ENCODE measurements at regions of chr6 and their contacts with region 1.

Region 1: GRCh38 chr6:44475779-44476434 is 88.4 kb downstream of the CDC5L start:
- DNase-seq: peak; percentile 81
- H3K4me3 Mint-ChIP-seq: no peak overlapping the region
- H3K27ac Mint-ChIP-seq: no peak overlapping the region
- H3K4me1 Mint-ChIP-seq: no peaks in the 10 kb centered on the region
- H3K27me3 Mint-ChIP-seq: peaks cover 5% of the 10 kb centered on the region

Region 2: GRCh38 chr6:43883847-43884651 is 591.9 kb before region 1 on chr6:
- CTCF ChIA-PET with region 1: no interaction called
- POLR2A ChIA-PET with region 1: no interaction called
- intact Hi-C with region 1: no loop called
- DNase-seq: no peak
- H3K4me3 Mint-ChIP-seq: no peak overlapping the region
- H3K27ac Mint-ChIP-seq: no peak overlapping the region
- H3K4me1 Mint-ChIP-seq: no peaks in the 10 kb centered on the region
- H3K27me3 Mint-ChIP-seq: peaks cover 9% of the 10 kb centered on the region

Region 3: GRCh38 chr6:44464527-44465310 is 11.2 kb before region 1 on chr6:
- CTCF ChIA-PET with region 1: interaction called, 60 read pairs
- POLR2A ChIA-PET with region 1: no interaction called
- intact Hi-C with region 1: no loop called
- DNase-seq: no peak
- H3K4me3 Mint-ChIP-seq: no peak overlapping the region
- H3K27ac Mint-ChIP-seq: no peak overlapping the region
- H3K4me1 Mint-ChIP-seq: no peaks in the 10 kb centered on the region
- H3K27me3 Mint-ChIP-seq: peaks cover 4% of the 10 kb centered on the region

Region 4: DNA sequence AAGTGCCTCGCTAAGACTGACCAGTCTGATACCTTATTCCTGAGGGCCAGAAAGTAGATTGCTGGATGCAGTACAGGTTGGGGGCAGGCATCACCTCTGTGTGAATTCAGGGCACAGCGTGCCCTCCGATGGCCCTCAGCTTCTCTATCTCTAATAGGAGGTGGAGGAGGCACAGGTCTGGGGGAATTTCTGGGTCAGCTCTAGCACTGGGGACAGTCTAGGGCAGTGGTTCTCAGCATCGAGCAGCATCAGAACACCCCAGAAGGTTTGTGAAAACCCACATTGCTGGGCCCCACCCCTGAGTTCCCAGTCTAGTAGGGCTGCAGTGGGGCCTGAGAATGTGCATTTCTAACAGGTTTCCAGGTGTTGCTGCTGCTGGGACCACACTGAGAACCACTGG is 78.3 kb after region 1 on chr6:
- CTCF ChIA-PET with region 1: no interaction called
- POLR2A ChIA-PET with region 1: no interaction called
- intact Hi-C with region 1: no loop called
- DNase-seq: no peak
- H3K4me3 Mint-ChIP-seq: no peak overlapping the region
- H3K27ac Mint-ChIP-seq: no peak overlapping the region
- H3K4me1 Mint-ChIP-seq: no peaks in the 10 kb centered on the region
- H3K27me3 Mint-ChIP-seq: peaks cover 16% of the 10 kb centered on the region

Region 5: DNA sequence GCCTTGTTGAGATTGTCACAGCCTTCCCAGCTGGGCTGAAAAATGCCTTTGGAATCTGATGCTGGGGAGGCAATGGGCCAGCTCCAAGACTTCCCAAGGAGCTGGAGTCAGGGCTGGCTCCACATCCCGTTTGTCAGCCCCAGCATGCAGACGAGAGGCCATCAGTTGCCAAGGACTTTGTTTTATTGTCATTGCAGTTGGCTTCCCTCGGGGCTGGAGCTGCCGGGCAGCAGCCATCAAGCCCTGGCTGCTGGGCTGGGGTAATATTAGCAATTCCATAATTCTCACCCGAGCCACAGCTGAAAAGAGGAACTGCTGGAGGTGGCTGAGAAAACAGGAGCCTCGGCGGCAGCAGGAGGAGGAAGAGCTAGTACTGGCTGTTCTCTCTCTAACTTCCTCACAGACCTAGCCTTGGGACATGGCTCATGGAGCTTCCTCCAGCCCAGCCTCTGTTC is 94.1 kb after region 1 on chr6:
- CTCF ChIA-PET with region 1: interaction called, 3 read pairs
- POLR2A ChIA-PET with region 1: no interaction called
- intact Hi-C with region 1: loop called (anchors 10 kb)
- DNase-seq: no peak
- H3K4me3 Mint-ChIP-seq: no peak overlapping the region
- H3K27ac Mint-ChIP-seq: no peak overlapping the region
- H3K4me1 Mint-ChIP-seq: no peaks in the 10 kb centered on the region
- H3K27me3 Mint-ChIP-seq: no peaks in the 10 kb centered on the region

Region 6: GRCh38 chr6:44630125-44631028 is 154.5 kb after region 1 on chr6:
- CTCF ChIA-PET with region 1: interaction called, 30 read pairs
- POLR2A ChIA-PET with region 1: no interaction called
- intact Hi-C with region 1: no loop called
- DNase-seq: peak; percentile 66
- H3K4me3 Mint-ChIP-seq: no peak overlapping the region
- H3K27ac Mint-ChIP-seq: no peak overlapping the region
- H3K4me1 Mint-ChIP-seq: peaks cover 15% of the 10 kb centered on the region
- H3K27me3 Mint-ChIP-seq: no peaks in the 10 kb centered on the region

Region 7: DNA sequence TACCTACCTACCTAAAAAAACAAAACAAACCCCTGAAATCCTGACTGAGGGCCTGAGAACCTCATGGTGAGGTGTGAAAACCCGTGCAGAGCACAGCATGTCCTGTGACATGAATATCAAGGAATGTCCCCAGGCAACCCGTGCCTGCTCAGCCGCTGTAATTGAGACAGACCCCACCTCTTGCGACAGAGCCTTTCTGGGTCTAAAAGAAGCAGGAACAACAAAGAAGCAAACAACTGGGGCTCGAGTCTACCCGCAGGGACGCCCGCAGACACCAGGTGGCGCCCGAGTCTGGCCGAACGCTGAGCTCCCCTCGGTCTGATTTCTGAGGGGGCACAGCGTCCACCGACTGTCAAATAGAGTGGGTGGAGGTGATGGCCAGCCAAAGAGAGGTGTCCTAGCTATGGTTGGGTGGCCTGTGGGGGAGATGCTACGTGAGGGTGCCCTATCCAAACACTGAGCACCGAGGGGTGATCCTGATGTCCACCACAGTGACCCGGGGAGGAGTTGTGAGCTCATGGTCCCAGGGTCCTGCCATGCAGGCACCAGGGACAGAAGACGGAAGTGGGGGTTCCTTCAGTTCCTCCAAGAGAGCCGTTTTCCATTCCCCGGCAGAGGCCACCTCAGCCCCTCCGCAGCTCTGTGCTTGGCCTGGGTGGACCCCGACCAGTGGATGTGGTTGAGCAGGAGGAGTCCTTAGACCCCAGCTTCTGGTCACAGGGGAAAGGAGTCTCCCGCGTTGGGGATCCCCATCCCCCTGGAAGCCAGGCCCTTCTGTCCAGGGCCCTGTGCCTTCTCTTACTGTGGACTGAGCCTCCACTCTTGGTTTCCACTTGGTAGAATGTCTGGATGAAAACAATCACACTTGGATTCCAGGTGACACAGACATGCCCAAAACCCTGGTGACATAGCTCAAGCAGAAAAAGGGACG is 179.8 kb after region 1 on chr6:
- CTCF ChIA-PET with region 1: interaction called, 11 read pairs
- POLR2A ChIA-PET with region 1: interaction called, 3 read pairs
- intact Hi-C with region 1: no loop called
- DNase-seq: peak; percentile 85
- H3K4me3 Mint-ChIP-seq: peak overlapping the region; percentile 24
- H3K27ac Mint-ChIP-seq: peak overlapping the region; percentile 76
- H3K4me1 Mint-ChIP-seq: peaks cover 9% of the 10 kb centered on the region
- H3K27me3 Mint-ChIP-seq: no peaks in the 10 kb centered on the region

Region 8: DNA sequence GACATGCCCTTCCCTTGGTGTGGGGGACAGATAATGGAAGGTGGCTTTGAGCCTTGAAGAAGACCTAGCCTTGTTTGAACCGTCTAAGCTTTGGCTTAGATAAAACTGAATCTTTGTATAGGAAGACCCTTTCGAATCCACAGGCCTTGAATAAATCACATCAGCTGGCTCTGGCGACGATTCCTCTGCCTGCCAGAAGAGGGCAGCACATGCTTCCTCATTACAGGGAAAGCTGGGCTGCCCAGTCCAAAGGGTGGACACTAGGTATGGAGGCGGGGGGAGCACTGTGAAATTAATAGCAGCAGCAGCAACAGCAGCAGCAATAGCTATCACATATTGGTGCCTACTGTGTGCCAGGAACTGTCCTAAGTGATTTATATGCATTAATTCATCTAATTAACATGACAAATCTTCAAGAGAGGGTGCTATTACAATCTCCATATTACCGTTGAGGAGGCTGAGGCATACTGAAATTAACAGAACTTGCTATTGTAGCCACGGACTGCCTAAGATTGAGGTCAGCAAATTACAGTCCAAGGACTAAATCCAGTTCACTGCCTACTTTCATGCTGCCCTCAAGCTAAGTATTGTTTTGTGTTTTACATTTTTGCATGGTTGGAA is 1454.6 kb after region 1 on chr6:
- CTCF ChIA-PET with region 1: interaction called, 12 read pairs
- POLR2A ChIA-PET with region 1: no interaction called
- intact Hi-C with region 1: no loop called
- DNase-seq: peak; percentile 68
- H3K4me3 Mint-ChIP-seq: no peak overlapping the region
- H3K27ac Mint-ChIP-seq: no peak overlapping the region
- H3K4me1 Mint-ChIP-seq: peaks cover 7% of the 10 kb centered on the region
- H3K27me3 Mint-ChIP-seq: no peaks in the 10 kb centered on the region

Region 9: DNA sequence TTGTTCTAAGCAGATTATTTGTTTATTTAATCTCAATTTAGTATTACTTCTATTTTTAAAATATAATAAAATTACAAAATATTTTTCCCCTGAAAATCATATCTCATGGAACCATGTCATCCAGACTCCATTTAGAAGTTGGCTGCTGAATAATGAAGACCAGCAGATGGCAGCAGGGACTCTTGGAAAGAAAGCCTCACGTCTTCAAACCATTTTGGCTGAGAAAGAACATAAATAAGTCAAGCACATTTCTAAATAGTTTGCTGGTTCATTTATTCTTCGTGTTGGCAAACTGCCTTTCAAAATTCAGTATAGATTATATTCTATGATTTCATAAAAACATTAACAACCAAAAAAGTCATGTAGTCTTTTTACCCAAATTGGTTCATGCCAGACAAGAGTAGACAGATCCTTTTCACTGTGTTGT is 1943.7 kb after region 1 on chr6:
- CTCF ChIA-PET with region 1: no interaction called
- POLR2A ChIA-PET with region 1: no interaction called
- intact Hi-C with region 1: loop called (anchors 10 kb)
- DNase-seq: peak; percentile 50
- H3K4me3 Mint-ChIP-seq: no peak overlapping the region
- H3K27ac Mint-ChIP-seq: no peak overlapping the region
- H3K4me1 Mint-ChIP-seq: no peaks in the 10 kb centered on the region
- H3K27me3 Mint-ChIP-seq: peaks cover 17% of the 10 kb centered on the region

Measured in activated CD4-positive, alpha-beta memory T cell treated with anti-CD3 and anti-CD28 coated beads for 36 hours (primary cell).